ENCODE measurements at regions of chr20 and their contacts with region 1.

Region 1: GRCh38 chr20:12970372-12970821 is 38.4 kb upstream of the SPTLC3 start:
- DNase-seq: peak; percentile 16
- H3K4me3 ChIP-seq: no peak overlapping the region
- H3K27ac ChIP-seq: no peak overlapping the region
- H3K27me3 ChIP-seq: peaks cover 11% of the 10 kb centered on the region
- CTCF ChIP-seq: peak; percentile 72

Region 2: GRCh38 chr20:12949429-12949980 is 20.9 kb before region 1 on chr20:
- CTCF ChIA-PET with region 1: interaction called, 20 read pairs
- POLR2A ChIA-PET with region 1: no interaction called
- DNase-seq: no peak
- H3K4me3 ChIP-seq: no peak overlapping the region
- H3K27ac ChIP-seq: no peak overlapping the region
- H3K27me3 ChIP-seq: no peaks in the 10 kb centered on the region
- CTCF ChIP-seq: no peak

Region 3: DNA sequence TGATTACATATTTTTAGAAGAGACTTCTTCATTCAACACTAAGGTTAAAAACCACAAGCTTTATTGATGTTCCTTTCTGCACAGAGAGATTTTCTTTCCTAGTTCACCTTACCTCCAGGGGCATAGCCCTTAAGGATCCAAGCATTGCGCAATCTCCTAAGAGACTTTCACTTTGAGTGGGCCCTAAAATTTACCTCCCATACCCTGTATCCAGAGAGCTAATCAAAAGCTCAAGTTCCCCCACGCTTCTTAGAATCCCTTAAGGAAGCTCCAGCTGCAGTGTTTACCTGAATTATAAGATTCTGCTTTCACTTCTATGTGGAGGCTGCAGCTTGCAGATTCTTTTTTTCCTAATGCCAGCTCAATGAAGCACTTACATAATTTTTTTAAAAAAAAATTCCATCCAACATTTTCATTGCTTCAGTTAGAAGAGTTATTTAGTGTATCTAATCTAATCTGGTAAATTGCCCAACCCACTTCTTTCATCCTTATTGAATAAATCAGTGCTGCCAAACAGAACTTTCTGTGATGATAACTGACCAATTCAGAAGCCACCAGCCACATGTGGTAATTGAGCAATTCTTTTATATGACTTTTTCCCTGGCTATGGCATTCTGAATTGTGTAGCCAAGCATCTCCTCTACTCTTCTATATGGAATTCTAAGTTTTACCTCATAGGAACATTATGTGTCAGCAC is 13.8 kb after region 1 on chr20:
- CTCF ChIA-PET with region 1: interaction called, 29 read pairs
- POLR2A ChIA-PET with region 1: no interaction called
- DNase-seq: no peak
- H3K4me3 ChIP-seq: no peak overlapping the region
- H3K27ac ChIP-seq: no peak overlapping the region
- H3K27me3 ChIP-seq: no peaks in the 10 kb centered on the region
- CTCF ChIP-seq: no peak

Region 4: GRCh38 chr20:13113731-13114130 is 143.3 kb after region 1 on chr20:
- CTCF ChIA-PET with region 1: interaction called, 102 read pairs
- POLR2A ChIA-PET with region 1: no interaction called
- DNase-seq: no peak
- H3K4me3 ChIP-seq: no peak overlapping the region
- H3K27ac ChIP-seq: no peak overlapping the region
- H3K27me3 ChIP-seq: peaks cover 3% of the 10 kb centered on the region
- CTCF ChIP-seq: no peak

Region 5: DNA sequence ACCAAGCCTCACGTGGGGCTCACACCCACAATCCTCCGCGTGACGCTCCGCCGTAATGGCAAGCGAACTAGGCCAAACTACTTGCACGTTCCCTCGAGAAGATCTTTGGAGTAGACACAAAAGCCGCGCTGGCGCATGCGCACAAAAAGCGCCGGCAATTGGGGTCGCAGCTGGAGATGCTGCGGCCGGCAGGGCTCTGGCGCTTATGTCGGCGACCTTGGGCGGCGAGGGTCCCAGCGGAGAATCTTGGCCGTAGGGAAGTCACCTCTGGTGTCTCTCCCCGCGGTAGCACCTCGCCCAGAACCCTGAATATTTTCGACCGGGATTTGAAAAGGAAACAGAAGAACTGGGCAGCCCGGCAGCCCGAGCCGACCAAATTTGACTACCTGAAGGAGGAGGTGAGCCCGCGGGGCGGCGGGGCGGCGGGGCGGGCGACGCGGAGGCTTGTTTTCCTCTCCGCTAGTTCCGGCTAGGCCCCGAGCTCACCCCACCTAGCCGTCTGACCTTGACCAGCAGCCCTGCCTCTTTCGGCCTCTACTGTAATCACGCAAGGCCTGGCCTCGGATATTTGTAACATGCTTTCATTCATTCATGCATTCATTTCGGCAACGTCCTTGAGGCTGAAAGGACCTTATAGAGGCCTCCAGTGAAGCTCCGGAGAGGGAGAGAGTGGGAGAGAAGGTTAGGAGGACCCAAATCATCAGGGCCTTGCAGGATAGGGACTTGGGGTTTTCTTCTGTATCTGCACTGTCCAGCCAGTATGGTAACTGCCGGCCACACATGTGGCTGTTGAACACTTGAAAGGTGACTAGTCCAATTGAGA is 814.7 kb after region 1 on chr20 and contains the starts of genes ESF1 and NDUFAF5:
- CTCF ChIA-PET with region 1: interaction called, 20 read pairs
- POLR2A ChIA-PET with region 1: no interaction called
- DNase-seq: peak; percentile 94
- H3K4me3 ChIP-seq: peak within 1 kb of the TSS; percentile 90
- H3K27ac ChIP-seq: peak within 1 kb of the TSS; percentile 62
- H3K27me3 ChIP-seq: no peaks in the 10 kb centered on the region
- CTCF ChIP-seq: no peak
- polyA plus RNA-seq, gene ESF1: 3.8 and 6.2 TPM in 2 replicates
- polyA plus RNA-seq, gene NDUFAF5: 18.4 and 24.1 TPM in 2 replicates